Activated CD4-positive, alpha-beta T cell treated with anti-CD3 and anti-CD28 coated beads for 36 hours (primary cell): ENCODE measurements at regions of chr15 and their contacts with region 1.

Region 1: GRCh38 chr15:90101969-90102890 is at the start of gene IDH2:
- DNase-seq: peak; percentile 85
- ATAC-seq: peak; percentile 73
- H3K4me3 Mint-ChIP-seq: peak within 1 kb of the TSS; percentile 86
- H3K27ac Mint-ChIP-seq: peak within 1 kb of the TSS; percentile 90
- H3K4me1 Mint-ChIP-seq: peaks cover 47% of the 10 kb centered on the region
- H3K27me3 Mint-ChIP-seq: no peaks in the 10 kb centered on the region
- total RNA-seq, gene IDH2: 176 to 182 TPM

Region 2: DNA sequence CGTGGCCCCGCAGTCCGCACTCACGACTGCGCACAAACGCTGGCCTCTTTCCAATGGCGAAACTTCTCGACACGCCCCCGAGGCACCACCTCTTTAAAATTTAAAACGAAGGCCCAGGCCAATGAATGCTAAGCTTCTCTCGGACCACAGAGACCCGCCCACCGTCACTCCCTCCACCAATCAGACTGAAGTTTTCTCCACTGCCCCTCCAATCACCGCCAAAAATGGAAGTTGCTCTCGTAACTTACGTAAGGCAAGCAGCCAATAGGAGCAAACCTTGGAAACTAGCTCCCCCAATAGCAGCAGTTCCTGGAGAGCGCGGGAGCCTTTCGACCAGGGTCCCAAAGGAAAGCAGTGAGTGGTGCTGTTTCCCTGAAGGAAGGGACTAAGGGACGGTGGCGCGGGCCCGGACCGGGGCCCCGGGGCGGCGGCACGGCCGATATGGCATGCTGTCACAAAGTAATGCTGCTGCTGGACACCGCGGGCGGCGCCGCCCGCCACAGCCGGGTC is 527.0 kb before region 1 on chr15 and contains the start of gene TICRR:
- CTCF ChIA-PET with region 1: no interaction called
- POLR2A ChIA-PET with region 1: no interaction called
- intact Hi-C with region 1: loop called in 1 of 2 experiments (anchors 1 kb)
- DNase-seq: peak; percentile 96
- ATAC-seq: peak; percentile 99
- H3K4me3 Mint-ChIP-seq: peak within 1 kb of the TSS; percentile 89
- H3K27ac Mint-ChIP-seq: peak within 1 kb of the TSS; percentile 72
- H3K4me1 Mint-ChIP-seq: peaks cover 26% of the 10 kb centered on the region
- H3K27me3 Mint-ChIP-seq: peaks cover 5% of the 10 kb centered on the region
- total RNA-seq, gene TICRR: 25.7 to 28.9 TPM

Region 3: GRCh38 chr15:89936051-89936785 is 166.0 kb before region 1 on chr15:
- CTCF ChIA-PET with region 1: no interaction called
- POLR2A ChIA-PET with region 1: no interaction called
- intact Hi-C with region 1: no loop called
- DNase-seq: peak; percentile 42
- ATAC-seq: peak; percentile 78
- H3K4me3 Mint-ChIP-seq: no peak overlapping the region
- H3K27ac Mint-ChIP-seq: no peak overlapping the region
- H3K4me1 Mint-ChIP-seq: peaks cover 20% of the 10 kb centered on the region
- H3K27me3 Mint-ChIP-seq: no peaks in the 10 kb centered on the region

Region 4: DNA sequence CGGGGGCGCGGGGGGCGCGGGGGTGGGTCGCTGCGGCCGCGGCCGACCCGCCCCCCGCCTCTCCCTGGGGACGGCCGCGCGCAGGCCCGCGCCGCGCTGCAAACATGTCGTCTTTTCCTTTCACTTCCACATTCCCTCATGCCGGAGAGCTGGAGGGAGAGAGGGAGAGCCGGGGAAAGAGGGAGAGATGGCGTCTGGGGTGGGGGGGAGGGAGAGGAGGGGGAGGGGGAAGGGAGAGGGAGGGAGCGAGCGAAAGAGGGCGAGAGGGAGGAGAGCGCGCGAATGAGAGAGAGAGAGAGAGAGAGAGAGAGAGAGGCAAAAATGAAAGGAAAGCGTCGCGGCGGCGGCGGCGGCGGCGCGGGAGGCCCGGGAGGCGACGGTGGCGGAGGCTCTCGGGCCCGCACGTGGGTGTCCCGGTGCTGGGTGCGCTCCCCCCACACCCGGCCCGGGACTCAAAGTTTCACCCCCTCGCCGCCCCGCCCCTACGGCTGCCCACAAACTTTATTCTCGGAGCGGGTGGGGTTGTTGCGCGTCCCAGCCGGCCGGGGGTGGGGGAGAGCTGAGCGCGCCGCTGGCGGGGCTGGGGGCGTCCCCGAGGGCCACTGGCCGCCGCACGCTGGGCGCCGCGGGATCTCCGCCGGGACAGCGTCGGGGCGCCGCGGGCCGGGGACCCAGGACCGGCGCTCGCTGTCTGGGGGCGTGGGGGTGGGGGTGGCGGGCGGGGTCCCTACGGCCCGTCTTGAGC is 100.4 kb before region 1 on chr15:
- CTCF ChIA-PET with region 1: no interaction called
- POLR2A ChIA-PET with region 1: no interaction called
- intact Hi-C with region 1: loop called in 1 of 2 experiments (anchors 1 kb)
- DNase-seq: peak; percentile 77
- ATAC-seq: peak; percentile 27
- H3K4me3 Mint-ChIP-seq: peak overlapping the region; percentile 82
- H3K27ac Mint-ChIP-seq: peak overlapping the region; percentile 88
- H3K4me1 Mint-ChIP-seq: peaks cover 61% of the 10 kb centered on the region
- H3K27me3 Mint-ChIP-seq: no peaks in the 10 kb centered on the region

Region 5: DNA sequence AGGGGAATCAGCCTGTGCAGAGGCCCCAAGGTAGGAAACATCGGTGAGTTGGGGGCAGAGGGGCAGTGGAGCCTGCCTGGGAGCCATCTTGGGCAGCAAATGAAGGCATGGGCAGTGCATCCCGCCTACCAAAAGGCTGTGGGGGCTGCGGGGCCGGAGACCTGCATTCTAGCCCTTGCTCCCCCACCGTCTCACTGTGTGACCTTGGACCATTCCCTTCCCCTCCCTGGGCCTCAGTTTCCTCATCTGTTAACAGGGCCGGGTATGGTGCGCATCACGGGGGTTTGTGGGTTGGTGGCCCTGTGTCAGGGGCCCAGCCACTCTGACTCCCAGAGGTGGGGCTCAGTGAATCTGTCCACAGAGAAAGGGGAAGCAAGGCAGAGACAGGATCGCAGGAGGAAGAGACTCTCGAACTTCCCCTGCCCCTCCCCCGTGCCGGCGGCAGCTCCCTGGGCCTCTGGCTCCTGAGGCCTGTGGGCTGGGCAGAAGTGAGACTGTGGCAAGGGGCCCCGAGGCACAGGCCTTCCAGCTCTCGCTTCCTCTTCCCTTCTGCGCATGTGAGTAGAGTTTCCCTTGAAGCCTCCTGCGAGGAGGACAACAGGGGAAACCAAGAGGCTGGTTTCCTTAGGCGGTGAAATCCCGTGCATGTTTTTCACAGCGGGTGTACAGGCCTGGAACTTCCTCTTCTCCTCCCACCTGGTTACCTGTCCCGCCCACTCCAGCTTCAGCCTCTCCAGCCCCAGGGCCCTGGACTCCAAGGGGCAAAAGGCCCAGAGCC is 42.8 kb before region 1 on chr15:
- CTCF ChIA-PET with region 1: no interaction called
- POLR2A ChIA-PET with region 1: no interaction called
- intact Hi-C with region 1: loop called in 1 of 2 experiments (anchors 1 kb)
- DNase-seq: peak; percentile 90
- ATAC-seq: peak; percentile 92
- H3K4me3 Mint-ChIP-seq: peak overlapping the region; percentile 46
- H3K27ac Mint-ChIP-seq: peak overlapping the region; percentile 94
- H3K4me1 Mint-ChIP-seq: peaks cover 58% of the 10 kb centered on the region
- H3K27me3 Mint-ChIP-seq: no peaks in the 10 kb centered on the region

Region 6: DNA sequence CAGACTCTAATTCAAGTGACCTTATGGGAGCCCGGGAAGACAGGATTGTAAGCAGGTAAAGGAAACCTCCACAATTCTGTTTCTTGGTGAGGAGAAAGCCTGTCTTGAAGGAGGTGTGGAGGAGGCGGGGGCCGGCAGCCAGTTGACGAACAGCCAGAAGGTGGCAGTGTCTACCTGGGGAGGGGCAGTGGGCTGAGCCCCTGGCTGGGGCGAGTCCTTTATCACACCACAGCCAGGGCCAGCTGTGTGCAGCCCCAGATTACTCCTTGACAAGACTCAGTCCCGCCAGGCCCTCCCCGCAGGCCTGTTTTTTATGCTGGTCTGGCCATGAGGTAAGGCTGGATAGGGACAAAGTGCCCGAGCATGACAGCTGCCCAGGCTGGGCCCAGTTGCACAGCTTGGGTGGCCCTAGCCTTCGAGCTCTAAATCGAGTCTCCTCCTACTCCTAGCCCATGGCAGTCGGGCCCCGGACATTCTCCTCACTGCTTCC is 41.0 kb after region 1 on chr15:
- CTCF ChIA-PET with region 1: interaction called, 4 read pairs
- POLR2A ChIA-PET with region 1: interaction called, 3 read pairs
- intact Hi-C with region 1: loop called (anchors 1 to 5 kb)
- DNase-seq: peak; percentile 90
- ATAC-seq: peak; percentile 92
- H3K4me3 Mint-ChIP-seq: peak overlapping the region; percentile 20
- H3K27ac Mint-ChIP-seq: peak overlapping the region; percentile 83
- H3K4me1 Mint-ChIP-seq: peaks cover 38% of the 10 kb centered on the region
- H3K27me3 Mint-ChIP-seq: no peaks in the 10 kb centered on the region

Region 7: GRCh38 chr15:90191794-90192509 is 89.7 kb after region 1 on chr15:
- CTCF ChIA-PET with region 1: no interaction called
- POLR2A ChIA-PET with region 1: no interaction called
- intact Hi-C with region 1: no loop called
- DNase-seq: peak; percentile 64
- ATAC-seq: peak; percentile 73
- H3K4me3 Mint-ChIP-seq: peak overlapping the region; percentile 14
- H3K27ac Mint-ChIP-seq: no peak overlapping the region
- H3K4me1 Mint-ChIP-seq: peaks cover 30% of the 10 kb centered on the region
- H3K27me3 Mint-ChIP-seq: no peaks in the 10 kb centered on the region

Region 8: DNA sequence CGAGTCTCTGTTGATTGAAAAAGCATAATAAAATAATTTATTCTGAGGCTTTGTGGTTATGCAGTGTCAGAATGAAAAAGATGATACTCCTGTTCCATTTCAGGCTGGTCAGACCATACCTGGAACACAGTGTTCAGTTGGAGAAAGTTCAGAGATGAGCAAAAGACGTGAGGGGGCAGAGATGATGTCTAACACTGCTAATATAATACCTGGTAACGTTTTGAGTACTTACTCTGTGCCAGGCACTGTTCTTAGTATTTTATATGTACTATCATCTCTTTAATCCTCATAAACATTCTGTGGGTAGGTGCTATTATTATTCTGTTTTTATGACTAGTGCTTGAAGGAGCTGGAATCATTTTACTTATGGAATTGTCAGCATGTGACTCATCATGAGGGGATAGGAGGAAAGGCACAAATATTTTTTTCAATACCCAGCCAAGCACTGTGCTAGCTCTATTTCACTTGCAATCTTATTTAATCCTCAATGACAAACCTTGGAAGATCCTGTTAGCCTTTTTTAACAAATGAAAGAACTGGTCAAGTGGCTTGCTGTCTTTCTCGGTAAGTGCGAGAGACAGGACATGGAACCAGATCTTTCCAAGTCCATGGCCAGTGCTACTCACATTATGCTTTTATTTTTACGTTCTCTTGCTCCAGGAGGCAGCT is 317.6 kb after region 1 on chr15:
- CTCF ChIA-PET with region 1: no interaction called
- POLR2A ChIA-PET with region 1: no interaction called
- intact Hi-C with region 1: loop called in 1 of 2 experiments (anchors 5 kb)
- DNase-seq: peak; percentile 61
- ATAC-seq: peak; percentile 95
- H3K4me3 Mint-ChIP-seq: peak overlapping the region; percentile 47
- H3K27ac Mint-ChIP-seq: peak overlapping the region; percentile 93
- H3K4me1 Mint-ChIP-seq: peaks cover 80% of the 10 kb centered on the region
- H3K27me3 Mint-ChIP-seq: no peaks in the 10 kb centered on the region